Activated CD4-positive, alpha-beta T cell treated with anti-CD3 and anti-CD28 coated beads, Interleukin-2, amount 10 ng/mL, durations not matched to agents 24 days and 14 days (primary cell): ENCODE measurements at regions of chr9 and their contacts with region 1.

Region 1: DNA sequence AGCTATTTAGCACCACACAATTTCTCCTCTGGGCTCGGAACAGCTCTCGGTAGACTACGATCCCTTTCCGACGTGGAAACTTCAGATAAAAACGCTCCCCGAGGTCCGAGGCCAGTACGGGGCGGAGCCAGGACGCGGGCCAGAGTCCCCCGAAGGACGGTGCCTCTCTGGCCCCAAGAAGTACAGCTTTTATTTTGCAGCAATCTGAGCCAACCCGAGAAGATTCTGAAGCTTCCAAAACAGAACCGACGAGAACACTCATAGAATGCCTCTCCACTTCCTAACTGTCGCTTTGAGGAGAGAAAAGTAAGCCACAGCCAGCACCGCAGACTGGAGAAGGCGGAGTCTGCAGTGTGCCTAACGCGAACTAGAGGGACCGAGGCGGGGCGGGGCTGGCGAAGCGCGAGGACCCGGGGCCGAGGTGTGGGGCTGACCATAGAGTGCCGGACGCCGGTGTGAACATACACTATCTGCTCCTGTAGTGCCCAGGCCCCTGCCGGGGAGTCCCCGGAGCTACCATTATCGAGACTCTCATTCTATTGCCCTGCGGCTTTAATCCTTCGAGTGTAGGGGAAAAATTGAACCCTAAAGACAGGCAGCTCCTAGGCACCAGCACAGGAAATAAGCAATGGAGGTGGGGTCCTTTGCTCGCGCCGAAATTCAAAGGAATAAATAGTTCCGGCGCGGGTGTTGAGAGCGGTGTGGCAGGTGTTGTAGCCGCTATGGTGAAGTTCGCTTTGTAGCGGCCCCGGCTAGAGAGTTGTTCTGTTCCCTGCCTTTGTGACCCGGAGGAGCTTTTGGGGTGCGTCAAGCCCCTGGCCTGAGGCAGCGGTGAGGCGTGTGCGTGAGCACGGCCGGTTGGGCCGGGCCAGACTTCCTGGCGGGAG is at the start of gene SMC2:
- DNase-seq: peak; percentile 98
- H3K4me3 Mint-ChIP-seq: peak within 1 kb of the TSS; percentile 98
- H3K27ac Mint-ChIP-seq: peak within 1 kb of the TSS; percentile 100
- H3K4me1 Mint-ChIP-seq: peaks cover 34% of the 10 kb centered on the region
- H3K27me3 Mint-ChIP-seq: no peaks in the 10 kb centered on the region
- total RNA-seq, gene SMC2: 57.2 and 60.8 TPM in 2 replicates

Region 2: GRCh38 chr9:104027295-104027694 is 66.6 kb before region 1 on chr9:
- intact Hi-C with region 1: loop called (anchors 5 kb)
- DNase-seq: no peak
- H3K4me3 Mint-ChIP-seq: no peak overlapping the region
- H3K27ac Mint-ChIP-seq: no peak overlapping the region
- H3K4me1 Mint-ChIP-seq: peaks cover 9% of the 10 kb centered on the region
- H3K27me3 Mint-ChIP-seq: no peaks in the 10 kb centered on the region

Region 3: GRCh38 chr9:104138243-104138868 is 44.5 kb after region 1 on chr9:
- intact Hi-C with region 1: loop called (anchors 5 kb)
- DNase-seq: no peak
- H3K4me3 Mint-ChIP-seq: no peak overlapping the region
- H3K27ac Mint-ChIP-seq: no peak overlapping the region
- H3K4me1 Mint-ChIP-seq: peaks cover 1% of the 10 kb centered on the region
- H3K27me3 Mint-ChIP-seq: no peaks in the 10 kb centered on the region

Region 4: DNA sequence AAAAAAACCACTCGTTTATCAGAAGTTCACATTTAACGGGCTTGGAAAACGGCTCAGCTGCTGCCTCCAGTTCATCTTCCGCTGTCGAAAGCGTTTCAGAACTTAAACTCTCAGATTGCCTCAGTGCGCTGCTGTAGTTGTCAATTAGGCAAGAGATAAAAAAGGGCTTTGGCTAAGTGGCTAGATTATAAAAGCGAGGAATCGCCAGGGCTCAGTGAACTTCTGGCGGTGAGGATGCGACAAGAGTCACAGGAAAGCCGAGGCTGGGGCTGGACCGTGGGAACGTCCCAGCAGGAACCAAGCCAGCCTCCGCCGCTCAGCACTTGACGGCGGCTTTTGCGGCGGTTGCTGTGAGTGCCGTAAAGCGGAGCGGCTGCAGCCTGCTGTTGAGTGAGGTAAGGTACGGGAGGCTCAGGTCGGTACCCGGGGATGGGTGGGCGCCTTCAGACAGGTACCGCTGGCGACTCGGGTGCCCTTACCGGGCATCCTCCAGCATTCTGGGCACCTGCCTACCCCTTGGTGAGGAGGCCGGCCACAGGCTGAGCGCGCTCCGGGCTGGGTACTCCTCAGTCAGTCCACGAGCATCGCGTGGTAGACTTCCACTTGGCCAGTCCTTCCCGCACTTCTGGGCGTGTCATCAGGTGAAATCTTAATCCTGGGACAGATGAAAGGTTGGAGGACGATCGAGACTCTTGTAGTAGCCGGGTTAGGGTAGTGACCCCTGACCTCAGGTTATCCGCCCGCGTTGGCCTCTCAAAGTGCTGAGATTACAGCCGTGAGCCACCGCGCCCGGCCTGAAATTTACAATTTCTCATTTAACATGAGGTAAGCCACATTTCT is 1464.1 kb after region 1 on chr9 and contains the start of gene FKTN:
- intact Hi-C with region 1: loop called (anchors 10 kb)
- DNase-seq: peak; percentile 94
- H3K4me3 Mint-ChIP-seq: peak within 1 kb of the TSS; percentile 94
- H3K27ac Mint-ChIP-seq: peak within 1 kb of the TSS; percentile 86
- H3K4me1 Mint-ChIP-seq: peaks cover 11% of the 10 kb centered on the region
- H3K27me3 Mint-ChIP-seq: no peaks in the 10 kb centered on the region
- total RNA-seq, gene FKTN: 17.3 and 17.4 TPM in 2 replicates